Naive thymus-derived CD8-positive, alpha-beta T cell (primary cell): ENCODE measurements at regions of chr20 and their contacts with region 1.

Region 1: GRCh38 chr20:52922436-52922835 is 49.7 kb upstream of the TSHZ2 start:
- DNase-seq: no peak
- ATAC-seq: no peak
- H3K4me3 Mint-ChIP-seq: no peak overlapping the region
- H3K27ac Mint-ChIP-seq: no peak overlapping the region
- H3K4me1 Mint-ChIP-seq: no peaks in the 10 kb centered on the region
- H3K27me3 Mint-ChIP-seq: peaks cover 8 to 25% (median 18%) of the 10 kb centered on the region in 5 donors

Region 2: GRCh38 chr20:52864916-52865605 is 57.4 kb before region 1 on chr20:
- POLR2A ChIA-PET with region 1: no interaction called
- DNase-seq: no peak
- ATAC-seq: no peak
- H3K4me3 Mint-ChIP-seq: no peak overlapping the region
- H3K27ac Mint-ChIP-seq: no peak overlapping the region
- H3K4me1 Mint-ChIP-seq: peaks cover 2 to 7% (median 4%) of the 10 kb centered on the region in 4 donors
- H3K27me3 Mint-ChIP-seq: peaks cover 1 to 14% (median 3%) of the 10 kb centered on the region in 5 donors

Region 3: GRCh38 chr20:52895701-52896100 is 26.7 kb before region 1 on chr20:
- POLR2A ChIA-PET with region 1: interaction called, 11 read pairs
- DNase-seq: no peak
- ATAC-seq: no peak
- H3K4me3 Mint-ChIP-seq: no peak overlapping the region
- H3K27ac Mint-ChIP-seq: no peak overlapping the region
- H3K4me1 Mint-ChIP-seq: peaks cover 2 to 8% (median 4%) of the 10 kb centered on the region in 4 donors
- H3K27me3 Mint-ChIP-seq: peaks cover 5 to 29% (median 10%) of the 10 kb centered on the region in 5 donors

Region 4: DNA sequence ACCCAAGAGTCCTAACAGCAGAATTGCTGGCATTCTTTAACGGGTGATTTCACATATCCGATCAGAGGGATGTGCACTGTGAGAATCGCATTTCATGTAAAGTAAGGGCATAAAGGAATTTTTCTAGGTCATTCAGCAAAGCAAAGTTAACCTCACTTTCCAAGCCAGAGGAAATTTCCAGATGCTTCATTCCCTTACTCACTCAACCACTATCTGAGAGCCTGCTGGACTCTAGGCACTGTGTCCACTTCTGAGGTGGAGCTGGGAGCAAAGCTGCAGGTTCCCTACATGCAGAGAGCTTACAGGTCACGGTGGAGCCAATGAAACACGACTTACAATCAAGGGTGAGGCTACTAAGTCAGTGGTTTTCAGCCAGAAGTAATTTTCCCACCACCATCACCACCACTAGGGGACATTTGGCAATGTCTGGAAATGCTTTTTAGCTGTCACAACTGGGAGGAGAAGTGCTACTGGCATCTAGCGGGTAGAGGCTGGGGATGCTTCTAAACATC is 15.2 kb after region 1 on chr20:
- POLR2A ChIA-PET with region 1: no interaction called
- DNase-seq: no peak
- ATAC-seq: no peak
- H3K4me3 Mint-ChIP-seq: no peak overlapping the region
- H3K27ac Mint-ChIP-seq: no peak overlapping the region
- H3K4me1 Mint-ChIP-seq: peaks cover 0 to 2% (median 0%) of the 10 kb centered on the region in 4 donors
- H3K27me3 Mint-ChIP-seq: peaks cover 0 to 2% (median 0%) of the 10 kb centered on the region in 5 donors

Region 5: GRCh38 chr20:53061192-53062108 is 139.0 kb after region 1 on chr20:
- POLR2A ChIA-PET with region 1: no interaction called
- DNase-seq: no peak
- ATAC-seq: no peak
- H3K4me3 Mint-ChIP-seq: peak overlapping the region in 2 of 10 donors; percentile 11 to 19
- H3K27ac Mint-ChIP-seq: peak overlapping the region in 2 of 10 donors; percentile 10 to 47
- H3K4me1 Mint-ChIP-seq: peaks cover 7 to 19% (median 17%) of the 10 kb centered on the region in 4 donors
- H3K27me3 Mint-ChIP-seq: peaks cover 0 to 8% (median 4%) of the 10 kb centered on the region in 5 donors